ENCODE measurements at regions of chr6 and their contacts with region 1.

Region 1: DNA sequence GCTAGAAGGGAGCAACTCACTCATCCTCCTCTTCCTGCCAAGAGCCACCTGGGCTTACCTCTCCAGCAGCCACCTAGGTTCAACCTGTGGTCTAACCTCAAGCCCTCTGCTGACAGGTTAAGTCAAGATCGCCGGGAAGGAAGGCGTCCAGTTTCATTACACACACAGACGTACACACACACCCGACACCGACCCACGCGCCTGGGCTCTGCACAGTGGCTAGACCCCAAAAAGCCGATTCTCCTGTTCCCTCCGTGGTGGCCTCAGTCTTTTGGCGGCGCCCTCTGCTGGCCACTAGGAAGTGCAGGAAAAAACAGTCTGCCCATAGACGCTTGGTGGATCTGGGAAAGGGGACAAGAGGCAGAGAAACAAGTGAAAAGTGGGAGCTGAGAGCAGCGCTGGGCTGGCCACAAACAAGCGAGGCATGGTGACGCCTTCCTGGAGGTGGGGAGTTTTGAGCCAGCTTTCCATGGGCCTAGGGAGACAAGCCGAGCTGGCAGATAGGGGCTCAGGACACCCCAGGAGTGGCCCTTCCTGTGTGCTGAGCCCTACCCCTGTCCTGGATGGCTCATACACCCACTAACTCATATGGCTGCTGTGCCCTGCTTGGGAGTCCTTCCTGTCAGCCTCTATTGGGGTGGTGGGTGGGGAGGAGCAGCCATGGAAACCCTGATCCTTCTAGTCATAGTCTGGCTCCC is 52.7 kb downstream of the MRPL14 start:
- DNase-seq: peak; percentile 89
- ATAC-seq: peak; percentile 55
- H3K4me3 Mint-ChIP-seq: peak overlapping the region; percentile 79
- H3K27ac Mint-ChIP-seq: peak overlapping the region; percentile 91
- H3K4me1 Mint-ChIP-seq: peaks cover 17% of the 10 kb centered on the region
- H3K27me3 Mint-ChIP-seq: peaks cover 16% of the 10 kb centered on the region

Region 2: GRCh38 chr6:43454696-43455530 is 619.7 kb before region 1 on chr6:
- CTCF ChIA-PET with region 1: no interaction called
- POLR2A ChIA-PET with region 1: no interaction called
- intact Hi-C with region 1: loop called in 1 of 2 experiments (anchors 10 kb)
- DNase-seq: peak; percentile 46
- ATAC-seq: peak; percentile 67
- H3K4me3 Mint-ChIP-seq: peak overlapping the region; percentile 72
- H3K27ac Mint-ChIP-seq: no peak overlapping the region
- H3K4me1 Mint-ChIP-seq: peaks cover 15% of the 10 kb centered on the region
- H3K27me3 Mint-ChIP-seq: peaks cover 3% of the 10 kb centered on the region

Region 3: GRCh38 chr6:43608310-43608763 is 466.3 kb before region 1 on chr6:
- CTCF ChIA-PET with region 1: interaction called, 3 read pairs
- POLR2A ChIA-PET with region 1: no interaction called
- intact Hi-C with region 1: loop called in 1 of 2 experiments (anchors 1 kb)
- DNase-seq: peak; percentile 79
- ATAC-seq: peak; percentile 66
- H3K4me3 Mint-ChIP-seq: no peak overlapping the region
- H3K27ac Mint-ChIP-seq: no peak overlapping the region
- H3K4me1 Mint-ChIP-seq: peaks cover 2% of the 10 kb centered on the region
- H3K27me3 Mint-ChIP-seq: no peaks in the 10 kb centered on the region

Region 4: GRCh38 chr6:43687437-43688347 is 386.9 kb before region 1 on chr6 and contains the start of gene MRPS18A:
- CTCF ChIA-PET with region 1: interaction called, 5 read pairs
- POLR2A ChIA-PET with region 1: interaction called, 4 read pairs
- intact Hi-C with region 1: loop called in 1 of 2 experiments (anchors 1 kb)
- DNase-seq: peak; percentile 91
- ATAC-seq: peak; percentile 99
- H3K4me3 Mint-ChIP-seq: peak within 1 kb of the TSS; percentile 90
- H3K27ac Mint-ChIP-seq: peak within 1 kb of the TSS; percentile 89
- H3K4me1 Mint-ChIP-seq: peaks cover 40% of the 10 kb centered on the region
- H3K27me3 Mint-ChIP-seq: no peaks in the 10 kb centered on the region
- total RNA-seq, gene MRPS18A: 54.0 to 68.7 TPM

Region 5: DNA sequence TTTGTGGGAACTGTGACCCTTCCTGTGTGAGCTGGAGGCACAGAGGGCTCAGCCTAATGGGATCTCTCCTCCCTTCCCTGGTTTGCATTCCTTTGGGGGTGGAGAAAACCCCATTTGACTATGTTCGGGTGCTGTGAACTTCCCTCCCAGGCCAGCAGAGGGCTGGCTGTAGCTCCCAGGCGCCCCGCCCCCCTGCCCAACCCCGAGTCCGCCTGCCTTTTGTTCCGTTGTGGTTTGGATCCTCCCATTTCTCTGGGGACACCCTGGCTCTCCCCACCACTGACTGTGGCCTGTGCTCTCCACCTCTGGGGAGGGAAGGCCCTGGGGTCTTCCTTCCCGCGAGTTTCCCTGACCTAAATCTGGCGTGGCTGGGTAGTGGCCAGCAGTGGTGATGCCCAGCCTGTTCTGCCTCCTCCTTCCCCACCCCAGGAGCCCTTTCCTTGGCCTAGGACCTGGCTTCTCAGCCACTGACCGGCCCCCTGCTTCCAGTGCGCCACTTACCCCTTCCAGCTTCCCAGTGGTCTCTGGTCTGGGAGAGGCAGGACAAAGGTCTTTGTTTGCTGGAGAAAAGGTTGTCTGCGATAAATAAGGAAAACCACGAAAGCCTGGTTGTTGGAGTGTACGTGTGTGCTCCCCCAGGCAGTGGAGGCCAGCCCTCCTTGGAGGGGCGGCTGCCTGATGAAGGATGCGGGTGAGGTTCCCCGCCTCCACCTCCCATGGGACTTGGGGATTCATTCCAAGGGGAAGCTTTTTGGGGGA is 299.6 kb before region 1 on chr6:
- CTCF ChIA-PET with region 1: interaction called, 46 read pairs
- POLR2A ChIA-PET with region 1: interaction called, 4 read pairs
- intact Hi-C with region 1: no loop called
- DNase-seq: peak; percentile 81
- ATAC-seq: no peak
- H3K4me3 Mint-ChIP-seq: peak overlapping the region; percentile 16
- H3K27ac Mint-ChIP-seq: no peak overlapping the region
- H3K4me1 Mint-ChIP-seq: peaks cover 23% of the 10 kb centered on the region
- H3K27me3 Mint-ChIP-seq: peaks cover 4% of the 10 kb centered on the region

Region 6: DNA sequence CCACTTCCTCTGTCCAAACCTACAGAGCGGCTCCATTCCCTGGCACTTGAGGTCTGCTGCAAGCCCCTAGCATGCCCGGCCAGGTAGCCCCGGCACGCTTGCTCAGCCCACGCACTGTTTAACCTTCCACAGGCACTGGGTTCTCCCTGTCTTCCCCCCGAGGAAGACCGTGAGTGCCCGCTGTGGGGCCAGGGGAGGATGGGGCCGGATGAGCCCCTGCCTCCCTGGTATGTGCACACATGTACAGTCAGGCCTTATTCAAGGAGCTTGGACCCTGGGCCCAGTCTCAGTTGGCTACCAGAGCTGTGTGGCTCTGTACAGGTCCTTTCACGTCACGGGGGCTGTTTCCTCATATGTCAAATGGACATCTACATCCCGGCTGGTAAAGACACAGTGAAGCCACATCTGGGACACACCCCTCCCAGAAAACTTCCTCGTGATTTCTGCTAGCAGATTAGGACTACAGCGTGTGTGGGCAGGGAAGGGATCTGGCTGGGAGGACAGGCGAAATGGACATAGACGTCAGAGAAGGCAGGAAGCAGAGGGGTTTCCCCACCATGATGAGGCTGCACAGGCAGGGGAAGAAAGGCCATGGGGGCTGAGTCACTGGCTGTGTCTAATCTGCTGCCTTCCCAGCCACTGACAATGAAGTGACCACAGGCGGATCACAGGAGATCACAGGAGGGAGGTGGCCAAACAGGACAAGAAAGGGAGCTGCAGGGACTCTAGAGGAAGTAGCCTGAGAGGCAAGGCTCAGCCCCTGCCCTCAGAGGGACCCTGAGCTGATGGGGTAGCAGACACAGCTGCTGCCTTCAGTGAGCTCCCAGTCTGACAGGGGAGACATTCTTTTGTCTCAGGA is 10.3 kb before region 1 on chr6:
- CTCF ChIA-PET with region 1: interaction called, 14 read pairs
- POLR2A ChIA-PET with region 1: no interaction called
- intact Hi-C with region 1: no loop called
- DNase-seq: peak; percentile 62
- ATAC-seq: peak; percentile 81
- H3K4me3 Mint-ChIP-seq: no peak overlapping the region
- H3K27ac Mint-ChIP-seq: no peak overlapping the region
- H3K4me1 Mint-ChIP-seq: peaks cover 8% of the 10 kb centered on the region
- H3K27me3 Mint-ChIP-seq: peaks cover 2% of the 10 kb centered on the region

Region 7: GRCh38 chr6:44265007-44265721 is 190.6 kb after region 1 on chr6 and contains the start of gene NFKBIE:
- CTCF ChIA-PET with region 1: no interaction called
- POLR2A ChIA-PET with region 1: no interaction called
- intact Hi-C with region 1: loop called in 1 of 2 experiments (anchors 1 kb)
- DNase-seq: peak; percentile 97
- ATAC-seq: peak; percentile 52
- H3K4me3 Mint-ChIP-seq: peak within 1 kb of the TSS; percentile 88
- H3K27ac Mint-ChIP-seq: peak within 1 kb of the TSS; percentile 93
- H3K4me1 Mint-ChIP-seq: peaks cover 58% of the 10 kb centered on the region
- H3K27me3 Mint-ChIP-seq: peaks cover 14% of the 10 kb centered on the region
- total RNA-seq, gene NFKBIE: 17.2 to 19.9 TPM